Breast epithelium (tissue), 4 donors: ENCODE measurements at regions of chr7 and their contacts with region 1.

Region 1: GRCh38 chr7:135977007-135977741 is at the start of gene MTPN:
- DNase-seq: peak; percentile 98
- H3K4me3 ChIP-seq: peak within 1 kb of the TSS; percentile 92 to 96 (median 95)
- H3K27ac ChIP-seq: peak within 1 kb of the TSS; percentile 88 to 94
- H3K4me1 ChIP-seq: no peaks in the 10 kb centered on the region
- H3K27me3 ChIP-seq: no peaks in the 10 kb centered on the region
- CTCF ChIP-seq: no peak
- POLR2A ChIP-seq: no peak
- total RNA-seq, gene MTPN: 66.5 to 97.0 (median 85.5) TPM

Region 2: GRCh38 chr7:134750083-134751062 is 1226.8 kb before region 1 on chr7:
- intact Hi-C with region 1: loop called (anchors 10 kb)
- DNase-seq: no peak
- H3K4me3 ChIP-seq: no peak overlapping the region
- H3K27ac ChIP-seq: no peak overlapping the region
- H3K4me1 ChIP-seq: no peaks in the 10 kb centered on the region
- H3K27me3 ChIP-seq: no peaks in the 10 kb centered on the region
- CTCF ChIP-seq: peak in 2 of 3 donors; percentile 38
- POLR2A ChIP-seq: no peak